ENCODE measurements at regions of chr17 and their contacts with region 1.

Region 1: DNA sequence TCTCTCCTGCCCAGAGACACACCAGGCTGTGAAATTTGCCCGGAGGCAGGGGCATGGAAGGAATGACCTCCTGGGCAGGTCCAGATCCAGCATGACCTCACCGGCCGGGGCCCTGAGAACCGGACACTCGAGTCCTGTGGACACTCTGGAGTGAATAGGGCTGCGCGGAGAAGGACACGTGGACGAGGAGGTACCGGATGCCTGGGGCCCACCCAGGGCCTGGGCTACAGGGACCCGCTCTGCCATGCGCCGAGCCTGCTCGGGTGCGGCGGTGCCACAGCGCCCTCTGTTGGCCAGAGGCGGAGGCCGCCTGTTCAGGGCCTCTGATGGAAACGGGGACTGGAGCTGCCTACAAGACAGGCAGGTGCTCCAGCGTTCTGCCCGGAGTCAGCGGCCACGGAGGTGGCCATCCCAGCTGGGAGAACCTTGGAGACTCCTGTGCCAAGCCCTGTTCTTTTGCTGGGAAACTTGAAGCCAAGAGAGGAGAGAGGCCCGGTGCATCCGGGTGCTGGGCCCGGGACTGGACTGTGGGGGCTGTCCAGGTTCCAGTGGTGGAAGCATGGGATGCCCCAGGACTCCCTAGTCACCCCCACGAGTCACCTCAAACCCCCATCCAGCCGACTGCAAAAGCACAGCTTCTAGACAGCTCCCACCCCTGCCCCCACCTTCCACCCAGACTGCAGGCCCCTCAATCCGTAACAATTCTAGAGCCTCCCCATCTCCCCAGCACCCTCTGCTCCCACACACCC is 19.3 kb upstream of the NXPH3 start:
- DNase-seq: peak; percentile 93
- H3K4me3 Mint-ChIP-seq: no peak overlapping the region
- H3K27ac Mint-ChIP-seq: no peak overlapping the region
- H3K4me1 Mint-ChIP-seq: peaks cover 9% of the 10 kb centered on the region
- H3K27me3 Mint-ChIP-seq: peaks cover 25% of the 10 kb centered on the region
- CTCF ChIP-seq: peak; percentile 99

Region 2: GRCh38 chr17:49407981-49408501 is 148.4 kb before region 1 on chr17:
- CTCF ChIA-PET with region 1: interaction called, 19 read pairs
- intact Hi-C with region 1: loop called (anchors 1 kb)
- DNase-seq: peak; percentile 89
- H3K4me3 Mint-ChIP-seq: no peak overlapping the region
- H3K27ac Mint-ChIP-seq: no peak overlapping the region
- H3K4me1 Mint-ChIP-seq: peaks cover 19% of the 10 kb centered on the region
- H3K27me3 Mint-ChIP-seq: no peaks in the 10 kb centered on the region
- CTCF ChIP-seq: peak; percentile 98

Region 3: DNA sequence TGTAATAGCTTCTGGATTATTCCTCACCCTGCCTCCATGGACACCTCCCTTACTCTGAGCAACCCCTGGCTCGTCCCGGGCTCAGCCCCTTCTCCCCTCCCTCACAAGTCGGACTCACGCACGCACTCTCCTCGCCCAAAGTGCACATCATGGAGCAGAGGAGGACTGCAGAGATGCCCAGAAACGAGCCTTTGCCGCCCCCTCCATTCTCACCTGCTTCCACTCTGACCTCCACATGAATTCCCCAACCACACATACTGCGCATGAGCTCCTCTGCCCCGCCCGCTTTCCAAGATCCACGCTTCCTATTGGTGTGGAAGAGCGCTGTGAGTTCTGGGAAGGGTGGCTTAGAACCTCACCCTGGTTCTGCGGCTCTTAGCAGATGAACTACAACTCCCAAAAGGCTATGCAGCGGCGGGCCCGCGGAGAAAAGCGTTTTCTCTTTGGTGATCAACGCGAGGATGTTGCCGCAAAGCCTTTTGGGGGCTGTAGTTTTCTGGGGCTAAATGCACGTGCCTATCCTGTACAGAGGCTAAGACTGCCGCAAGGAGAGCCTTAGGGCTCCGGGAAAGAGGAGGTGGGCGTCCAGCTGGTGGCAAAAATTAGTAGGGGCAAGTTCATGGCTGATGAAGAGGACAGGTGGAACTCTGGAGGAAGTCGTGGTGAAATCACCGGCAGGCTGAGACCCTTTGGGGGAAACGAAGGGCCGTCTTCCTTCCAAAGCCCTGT is 141.6 kb before region 1 on chr17 and contains the start of gene PHB1:
- CTCF ChIA-PET with region 1: interaction called, 13 read pairs
- intact Hi-C with region 1: no loop called
- DNase-seq: peak; percentile 98
- H3K4me3 Mint-ChIP-seq: peak within 1 kb of the TSS; percentile 92
- H3K27ac Mint-ChIP-seq: peak within 1 kb of the TSS; percentile 87
- H3K4me1 Mint-ChIP-seq: peaks cover 10% of the 10 kb centered on the region
- H3K27me3 Mint-ChIP-seq: no peaks in the 10 kb centered on the region
- CTCF ChIP-seq: no peak
- total RNA-seq, gene PHB1: 413 and 469 TPM in 2 replicates

Region 4: DNA sequence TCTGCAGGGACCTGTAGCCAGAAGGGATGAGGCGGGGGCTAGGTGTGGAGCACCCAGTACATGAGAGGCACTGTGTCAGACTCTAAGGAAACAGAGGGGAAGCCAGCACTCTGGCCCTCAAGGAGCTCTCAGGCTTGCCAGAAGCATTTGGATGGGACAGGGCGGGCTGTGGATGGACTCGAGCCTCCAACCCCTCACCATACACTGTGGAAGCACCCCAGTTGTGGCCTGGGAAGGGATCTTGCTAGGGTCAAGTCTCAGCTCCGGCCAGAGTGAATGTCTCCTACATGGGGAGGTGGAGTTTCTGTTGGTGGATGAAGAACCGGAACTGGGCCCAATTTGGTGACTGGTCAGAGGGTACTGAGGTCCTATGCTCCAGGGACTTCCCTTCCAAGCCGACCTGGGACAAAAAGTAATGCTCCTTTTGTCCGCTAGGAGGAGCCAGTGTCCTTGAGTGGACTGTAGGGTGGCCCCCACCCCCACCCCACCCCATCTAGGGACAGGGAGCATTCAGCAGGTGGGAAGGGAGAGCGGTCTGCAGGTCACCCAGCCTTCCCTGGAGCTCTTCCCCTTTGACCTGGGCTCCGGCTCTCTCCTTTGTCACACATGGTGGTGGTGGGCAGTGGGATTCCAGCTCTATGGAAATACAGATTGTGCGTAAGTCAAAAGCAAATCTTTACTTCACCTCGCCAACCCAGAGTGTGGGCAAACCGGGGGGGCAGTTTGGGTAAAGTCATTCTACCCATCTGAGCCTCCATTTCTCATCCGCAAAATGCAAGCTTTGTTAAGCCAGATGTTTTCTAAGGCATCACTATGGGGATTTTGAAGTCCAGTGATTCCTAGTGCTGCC is 121.4 kb before region 1 on chr17:
- CTCF ChIA-PET with region 1: interaction called, 37 read pairs
- intact Hi-C with region 1: loop called (anchors 1 kb)
- DNase-seq: peak; percentile 81
- H3K4me3 Mint-ChIP-seq: no peak overlapping the region
- H3K27ac Mint-ChIP-seq: no peak overlapping the region
- H3K4me1 Mint-ChIP-seq: no peaks in the 10 kb centered on the region
- H3K27me3 Mint-ChIP-seq: peaks cover 65% of the 10 kb centered on the region
- CTCF ChIP-seq: peak; percentile 93

Region 5: DNA sequence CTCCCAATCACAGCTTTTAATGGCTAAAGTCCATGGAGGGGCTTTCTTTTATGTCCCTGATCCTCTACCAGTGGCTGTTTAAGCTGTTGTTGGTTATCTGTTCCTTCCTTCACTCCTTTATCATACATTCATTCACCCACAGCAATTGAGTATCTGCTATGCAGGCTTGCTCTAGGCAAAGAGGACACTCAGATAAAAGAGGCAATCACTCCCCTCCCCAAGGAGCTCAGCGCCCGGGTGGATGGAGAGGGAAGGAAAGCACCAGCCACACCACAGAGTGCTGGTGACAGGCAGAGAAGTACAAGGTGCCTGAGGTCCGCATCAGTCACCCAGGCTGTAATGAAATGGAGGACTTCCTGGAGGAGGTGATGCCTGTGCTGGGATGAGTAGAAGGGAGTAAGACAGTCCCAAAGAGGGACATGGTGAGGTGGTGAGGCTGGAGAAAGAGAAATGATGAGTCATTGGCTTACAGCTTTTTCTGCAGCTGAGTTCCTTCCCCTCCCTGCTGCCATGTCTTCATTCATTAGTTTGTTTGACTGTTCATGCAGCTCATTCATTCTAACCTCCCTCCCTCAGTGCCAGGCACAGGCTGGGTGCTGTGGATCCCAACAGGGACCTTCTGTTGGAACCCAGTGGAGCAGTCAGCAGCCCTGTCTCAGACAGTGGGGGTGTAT is 74.1 kb before region 1 on chr17:
- CTCF ChIA-PET with region 1: no interaction called
- intact Hi-C with region 1: no loop called
- DNase-seq: no peak
- H3K4me3 Mint-ChIP-seq: no peak overlapping the region
- H3K27ac Mint-ChIP-seq: no peak overlapping the region
- H3K4me1 Mint-ChIP-seq: no peaks in the 10 kb centered on the region
- H3K27me3 Mint-ChIP-seq: peaks cover 100% of the 10 kb centered on the region
- CTCF ChIP-seq: no peak

Region 6: DNA sequence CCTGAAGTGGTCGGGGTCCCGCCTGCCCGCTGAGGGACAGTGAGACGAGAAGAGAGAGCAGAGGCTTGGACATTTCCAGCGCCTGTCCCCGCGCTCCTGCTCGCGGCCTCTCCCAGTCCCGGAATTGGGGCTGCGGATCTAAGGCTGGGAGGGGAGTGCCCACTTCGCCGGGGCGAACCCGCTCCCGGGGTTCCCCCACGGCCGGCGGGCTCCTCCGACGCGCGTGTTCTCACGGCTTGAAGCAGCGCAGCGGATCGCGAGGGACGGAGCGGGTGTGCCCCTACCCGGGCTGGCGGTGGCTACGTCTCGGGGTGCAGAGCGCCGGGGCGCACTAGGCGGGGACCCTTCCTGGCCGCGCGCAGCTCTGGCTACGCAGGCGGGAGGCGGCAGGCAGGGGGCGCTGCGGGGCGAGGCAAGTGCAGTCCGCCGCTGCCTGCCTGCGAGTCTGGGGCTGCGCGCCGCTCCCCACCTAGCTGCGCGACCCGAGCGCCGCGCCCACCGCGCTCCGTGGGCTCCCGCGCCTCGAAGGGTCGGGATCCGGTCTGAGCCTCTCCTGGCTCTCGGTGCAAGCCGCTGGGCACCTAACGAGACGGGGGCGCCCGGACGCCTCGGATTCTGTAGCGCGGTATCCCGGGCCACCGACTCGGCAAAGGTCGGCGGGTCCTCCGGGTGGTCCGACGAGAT is 60.1 kb before region 1 on chr17:
- CTCF ChIA-PET with region 1: interaction called, 6 read pairs
- intact Hi-C with region 1: loop called (anchors 2 kb)
- DNase-seq: peak; percentile 88
- H3K4me3 Mint-ChIP-seq: peak overlapping the region; percentile 69
- H3K27ac Mint-ChIP-seq: no peak overlapping the region
- H3K4me1 Mint-ChIP-seq: peaks cover 10% of the 10 kb centered on the region
- H3K27me3 Mint-ChIP-seq: peaks cover 99% of the 10 kb centered on the region
- CTCF ChIP-seq: peak; percentile 80

Region 7: GRCh38 chr17:49567871-49568694 is 11.7 kb after region 1 on chr17:
- CTCF ChIA-PET with region 1: interaction called, 18 read pairs
- intact Hi-C with region 1: no loop called
- DNase-seq: peak; percentile 98
- H3K4me3 Mint-ChIP-seq: peak overlapping the region; percentile 68
- H3K27ac Mint-ChIP-seq: no peak overlapping the region
- H3K4me1 Mint-ChIP-seq: peaks cover 14% of the 10 kb centered on the region
- H3K27me3 Mint-ChIP-seq: peaks cover 64% of the 10 kb centered on the region
- CTCF ChIP-seq: peak; percentile 98

Region 8: DNA sequence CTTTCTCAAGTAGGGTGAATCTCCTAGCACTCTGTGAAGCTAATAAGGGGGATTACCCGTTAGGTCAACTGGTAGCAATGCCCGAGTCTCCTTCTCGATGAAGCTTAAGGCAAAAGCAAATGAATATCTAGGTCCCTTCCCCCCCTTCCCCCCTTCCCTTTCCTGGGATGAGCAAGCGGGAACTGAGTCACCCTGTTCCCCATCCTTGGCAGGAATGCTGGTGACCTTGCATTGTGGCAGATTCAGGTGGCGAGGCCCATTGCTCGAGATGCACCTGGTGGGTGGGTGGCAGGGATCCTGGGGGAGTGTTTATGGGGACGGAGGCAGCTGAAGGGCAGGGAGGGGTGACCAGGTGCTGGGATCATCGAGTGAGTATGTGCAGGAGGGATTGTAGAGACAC is 26.4 kb after region 1 on chr17:
- CTCF ChIA-PET with region 1: no interaction called
- intact Hi-C with region 1: no loop called
- DNase-seq: no peak
- H3K4me3 Mint-ChIP-seq: no peak overlapping the region
- H3K27ac Mint-ChIP-seq: no peak overlapping the region
- H3K4me1 Mint-ChIP-seq: no peaks in the 10 kb centered on the region
- H3K27me3 Mint-ChIP-seq: peaks cover 42% of the 10 kb centered on the region
- CTCF ChIP-seq: no peak

Measured in Calu3 (cell line).